ENCODE measurements at regions of chr16 and their contacts with region 1.

Region 1: DNA sequence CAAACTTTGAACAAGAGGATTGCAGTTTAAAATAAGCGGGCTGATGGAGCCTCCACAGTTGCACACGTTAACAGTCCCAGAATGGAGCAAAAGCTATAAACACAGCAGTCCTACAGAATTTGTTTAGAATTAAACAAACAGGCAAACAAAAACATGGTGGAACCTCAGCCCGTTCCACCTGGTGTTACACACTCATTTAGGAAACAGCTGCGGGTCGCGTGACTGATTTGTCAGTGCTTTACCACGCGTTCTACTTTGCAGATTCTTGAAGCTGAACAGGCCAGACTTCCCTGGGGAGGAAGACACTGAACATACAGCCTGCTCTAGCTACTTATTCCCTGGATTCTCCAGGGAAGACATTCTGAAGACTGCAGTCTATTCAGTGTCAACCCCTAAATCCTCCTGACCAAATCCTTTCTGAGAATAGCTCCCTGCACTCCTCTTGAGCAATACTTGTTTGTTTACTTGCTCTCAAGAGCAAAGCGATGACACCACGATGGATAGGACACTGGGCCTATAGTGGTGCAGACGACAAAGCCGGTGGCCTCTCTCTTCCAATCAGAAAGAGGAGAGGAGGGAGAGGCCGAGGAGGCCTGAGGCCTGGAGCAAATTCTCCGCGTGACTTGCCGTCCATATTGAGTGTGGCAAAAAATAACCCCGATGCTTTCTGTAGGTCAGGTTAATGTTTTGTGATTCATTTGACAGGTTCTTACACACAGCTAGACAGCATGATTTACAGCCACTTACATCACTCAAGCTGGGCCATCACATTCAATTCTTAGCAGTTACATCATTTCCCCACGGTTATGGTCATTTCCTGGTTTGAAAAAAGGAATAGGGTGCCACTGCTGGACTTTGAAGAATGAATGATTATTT is 4.0 kb upstream of the MAP1LC3B start:
- DNase-seq: peak; percentile 99
- H3K4me3 Mint-ChIP-seq: peak overlapping the region; percentile 64
- H3K27ac Mint-ChIP-seq: peak overlapping the region; percentile 94
- H3K4me1 Mint-ChIP-seq: peaks cover 25% of the 10 kb centered on the region
- H3K27me3 Mint-ChIP-seq: no peaks in the 10 kb centered on the region
- CTCF ChIP-seq: no peak

Region 2: GRCh38 chr16:87316923-87317749 is 71.0 kb before region 1 on chr16 and contains the start of gene C16orf95:
- CTCF ChIA-PET with region 1: interaction called, 4 read pairs
- POLR2A ChIA-PET with region 1: interaction called, 69 read pairs
- intact Hi-C with region 1: no loop called
- DNase-seq: peak; percentile 95
- H3K4me3 Mint-ChIP-seq: peak within 1 kb of the TSS; percentile 83
- H3K27ac Mint-ChIP-seq: peak within 1 kb of the TSS; percentile 93
- H3K4me1 Mint-ChIP-seq: peaks cover 6% of the 10 kb centered on the region
- H3K27me3 Mint-ChIP-seq: no peaks in the 10 kb centered on the region
- CTCF ChIP-seq: peak; percentile 50
- total RNA-seq, gene C16orf95: 5.7 and 5.8 TPM in 2 replicates

Region 3: DNA sequence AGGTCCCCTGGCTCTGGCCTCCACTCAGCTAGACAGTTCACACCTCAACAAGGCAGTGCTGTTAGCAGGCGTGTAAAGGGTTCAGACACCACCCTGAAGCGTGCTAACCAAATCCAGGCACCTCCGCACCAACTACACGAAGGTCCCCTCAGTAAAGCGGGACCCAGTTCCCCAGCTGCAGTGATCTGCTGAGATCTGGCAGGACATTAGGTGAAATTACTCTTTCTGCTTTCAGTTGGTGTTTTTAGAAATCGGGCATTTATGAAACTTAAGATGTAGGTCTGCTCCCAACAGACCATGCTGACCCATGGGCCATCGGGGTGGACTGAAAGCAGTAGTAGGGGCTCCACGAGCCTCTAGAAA is 31.7 kb before region 1 on chr16:
- CTCF ChIA-PET with region 1: no interaction called
- POLR2A ChIA-PET with region 1: no interaction called
- intact Hi-C with region 1: no loop called
- DNase-seq: no peak
- H3K4me3 Mint-ChIP-seq: no peak overlapping the region
- H3K27ac Mint-ChIP-seq: no peak overlapping the region
- H3K4me1 Mint-ChIP-seq: no peaks in the 10 kb centered on the region
- H3K27me3 Mint-ChIP-seq: no peaks in the 10 kb centered on the region
- CTCF ChIP-seq: no peak

Region 4: GRCh38 chr16:87375426-87376135 is 12.6 kb before region 1 on chr16:
- CTCF ChIA-PET with region 1: interaction called, 5 read pairs
- POLR2A ChIA-PET with region 1: interaction called, 101 read pairs
- intact Hi-C with region 1: no loop called
- DNase-seq: peak; percentile 63
- H3K4me3 Mint-ChIP-seq: peak overlapping the region; percentile 62
- H3K27ac Mint-ChIP-seq: peak overlapping the region; percentile 99
- H3K4me1 Mint-ChIP-seq: peaks cover 8% of the 10 kb centered on the region
- H3K27me3 Mint-ChIP-seq: no peaks in the 10 kb centered on the region
- CTCF ChIP-seq: no peak

Region 5: DNA sequence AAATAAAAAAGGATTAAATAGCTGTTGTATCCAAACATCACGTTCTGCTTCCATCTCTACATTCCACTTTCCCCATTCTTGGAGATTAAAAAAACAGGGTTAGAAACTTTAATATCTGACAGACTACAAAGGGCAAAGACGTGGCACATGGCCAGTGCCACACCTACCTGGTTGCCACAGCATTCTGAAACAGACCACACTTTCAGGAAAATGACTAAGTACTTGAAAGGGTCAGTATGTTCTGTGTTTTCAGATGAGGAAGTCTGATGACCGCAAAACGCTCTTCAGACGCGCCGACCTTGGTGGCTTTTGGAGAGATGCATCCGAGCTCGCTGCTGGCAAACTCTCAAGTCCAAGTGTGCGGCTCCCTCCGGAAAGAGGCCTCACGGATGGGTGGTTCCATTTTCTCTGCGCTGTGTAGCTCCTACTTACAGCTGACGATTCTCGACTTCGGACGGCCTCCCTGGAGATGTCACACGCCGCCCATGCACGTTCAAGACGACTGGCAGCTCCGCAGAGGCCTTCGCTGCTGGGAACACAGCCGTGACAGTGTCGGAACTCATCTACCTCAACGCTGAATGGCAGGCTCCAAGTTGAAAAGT is 19.4 kb after region 1 on chr16:
- CTCF ChIA-PET with region 1: no interaction called
- POLR2A ChIA-PET with region 1: interaction called, 15 read pairs
- intact Hi-C with region 1: no loop called
- DNase-seq: peak; percentile 94
- H3K4me3 Mint-ChIP-seq: no peak overlapping the region
- H3K27ac Mint-ChIP-seq: peak overlapping the region; percentile 43
- H3K4me1 Mint-ChIP-seq: peaks cover 14% of the 10 kb centered on the region
- H3K27me3 Mint-ChIP-seq: no peaks in the 10 kb centered on the region
- CTCF ChIP-seq: no peak

Region 6: DNA sequence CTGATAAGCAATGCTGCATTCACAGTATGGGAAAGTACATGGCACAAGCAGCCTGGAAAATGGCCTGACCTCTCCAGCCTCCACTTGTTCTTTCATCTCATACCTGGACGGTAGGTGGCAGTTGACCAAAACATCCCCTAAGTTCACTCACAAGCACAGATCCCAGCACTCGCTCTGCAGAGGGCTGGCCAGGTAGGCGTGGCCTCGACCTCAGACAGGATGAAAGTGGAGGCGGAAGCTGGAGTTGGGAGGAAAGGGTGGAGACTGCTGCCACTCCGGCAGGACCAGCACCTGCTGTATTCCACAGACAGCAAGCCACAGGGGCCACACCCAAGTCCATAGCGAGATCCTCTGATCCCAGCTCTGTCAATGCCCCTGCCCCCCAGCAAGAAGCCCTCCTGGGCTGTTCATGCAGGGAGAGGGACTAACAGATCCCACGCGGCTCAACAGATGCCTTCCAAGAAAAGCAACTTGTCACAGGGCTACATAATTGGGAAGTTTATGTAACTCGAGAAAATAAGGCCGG is 73.3 kb after region 1 on chr16:
- CTCF ChIA-PET with region 1: interaction called, 5 read pairs
- POLR2A ChIA-PET with region 1: interaction called, 13 read pairs
- intact Hi-C with region 1: no loop called
- DNase-seq: peak; percentile 95
- H3K4me3 Mint-ChIP-seq: peak overlapping the region; percentile 57
- H3K27ac Mint-ChIP-seq: no peak overlapping the region
- H3K4me1 Mint-ChIP-seq: peaks cover 31% of the 10 kb centered on the region
- H3K27me3 Mint-ChIP-seq: no peaks in the 10 kb centered on the region
- CTCF ChIP-seq: peak; percentile 37

Region 7: GRCh38 chr16:87487361-87488001 is 99.3 kb after region 1 on chr16:
- CTCF ChIA-PET with region 1: no interaction called
- POLR2A ChIA-PET with region 1: interaction called, 19 read pairs
- intact Hi-C with region 1: no loop called
- DNase-seq: peak; percentile 73
- H3K4me3 Mint-ChIP-seq: peak overlapping the region; percentile 74
- H3K27ac Mint-ChIP-seq: peak overlapping the region; percentile 25
- H3K4me1 Mint-ChIP-seq: peaks cover 65% of the 10 kb centered on the region
- H3K27me3 Mint-ChIP-seq: no peaks in the 10 kb centered on the region
- CTCF ChIP-seq: no peak